Activated naive CD4-positive, alpha-beta T cell treated with anti-CD3 and anti-CD28 coated beads for 36 hours (primary cell): ENCODE measurements at regions of chr20 and their contacts with region 1.

Region 1: DNA sequence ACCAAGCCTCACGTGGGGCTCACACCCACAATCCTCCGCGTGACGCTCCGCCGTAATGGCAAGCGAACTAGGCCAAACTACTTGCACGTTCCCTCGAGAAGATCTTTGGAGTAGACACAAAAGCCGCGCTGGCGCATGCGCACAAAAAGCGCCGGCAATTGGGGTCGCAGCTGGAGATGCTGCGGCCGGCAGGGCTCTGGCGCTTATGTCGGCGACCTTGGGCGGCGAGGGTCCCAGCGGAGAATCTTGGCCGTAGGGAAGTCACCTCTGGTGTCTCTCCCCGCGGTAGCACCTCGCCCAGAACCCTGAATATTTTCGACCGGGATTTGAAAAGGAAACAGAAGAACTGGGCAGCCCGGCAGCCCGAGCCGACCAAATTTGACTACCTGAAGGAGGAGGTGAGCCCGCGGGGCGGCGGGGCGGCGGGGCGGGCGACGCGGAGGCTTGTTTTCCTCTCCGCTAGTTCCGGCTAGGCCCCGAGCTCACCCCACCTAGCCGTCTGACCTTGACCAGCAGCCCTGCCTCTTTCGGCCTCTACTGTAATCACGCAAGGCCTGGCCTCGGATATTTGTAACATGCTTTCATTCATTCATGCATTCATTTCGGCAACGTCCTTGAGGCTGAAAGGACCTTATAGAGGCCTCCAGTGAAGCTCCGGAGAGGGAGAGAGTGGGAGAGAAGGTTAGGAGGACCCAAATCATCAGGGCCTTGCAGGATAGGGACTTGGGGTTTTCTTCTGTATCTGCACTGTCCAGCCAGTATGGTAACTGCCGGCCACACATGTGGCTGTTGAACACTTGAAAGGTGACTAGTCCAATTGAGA is at the starts of genes ESF1 and NDUFAF5:
- DNase-seq: peak; percentile 96
- H3K4me3 Mint-ChIP-seq: peak within 1 kb of the TSS; percentile 99
- H3K27ac Mint-ChIP-seq: peak within 1 kb of the TSS; percentile 95
- H3K4me1 Mint-ChIP-seq: peaks cover 48% of the 10 kb centered on the region
- H3K27me3 Mint-ChIP-seq: no peaks in the 10 kb centered on the region
- total RNA-seq, gene ESF1: 14.5 TPM
- total RNA-seq, gene NDUFAF5: 27.4 to 28.1 TPM

Region 2: GRCh38 chr20:13119583-13119982 is 665.5 kb before region 1 on chr20:
- CTCF ChIA-PET with region 1: no interaction called
- intact Hi-C with region 1: loop called (anchors 5 kb)
- DNase-seq: peak; percentile 43
- H3K4me3 Mint-ChIP-seq: no peak overlapping the region
- H3K27ac Mint-ChIP-seq: no peak overlapping the region
- H3K4me1 Mint-ChIP-seq: no peaks in the 10 kb centered on the region
- H3K27me3 Mint-ChIP-seq: no peaks in the 10 kb centered on the region

Region 3: GRCh38 chr20:13243826-13244376 is 541.2 kb before region 1 on chr20:
- CTCF ChIA-PET with region 1: no interaction called
- intact Hi-C with region 1: loop called (anchors 1 kb)
- DNase-seq: no peak
- H3K4me3 Mint-ChIP-seq: no peak overlapping the region
- H3K27ac Mint-ChIP-seq: no peak overlapping the region
- H3K4me1 Mint-ChIP-seq: peaks cover 38% of the 10 kb centered on the region
- H3K27me3 Mint-ChIP-seq: no peaks in the 10 kb centered on the region

Region 4: DNA sequence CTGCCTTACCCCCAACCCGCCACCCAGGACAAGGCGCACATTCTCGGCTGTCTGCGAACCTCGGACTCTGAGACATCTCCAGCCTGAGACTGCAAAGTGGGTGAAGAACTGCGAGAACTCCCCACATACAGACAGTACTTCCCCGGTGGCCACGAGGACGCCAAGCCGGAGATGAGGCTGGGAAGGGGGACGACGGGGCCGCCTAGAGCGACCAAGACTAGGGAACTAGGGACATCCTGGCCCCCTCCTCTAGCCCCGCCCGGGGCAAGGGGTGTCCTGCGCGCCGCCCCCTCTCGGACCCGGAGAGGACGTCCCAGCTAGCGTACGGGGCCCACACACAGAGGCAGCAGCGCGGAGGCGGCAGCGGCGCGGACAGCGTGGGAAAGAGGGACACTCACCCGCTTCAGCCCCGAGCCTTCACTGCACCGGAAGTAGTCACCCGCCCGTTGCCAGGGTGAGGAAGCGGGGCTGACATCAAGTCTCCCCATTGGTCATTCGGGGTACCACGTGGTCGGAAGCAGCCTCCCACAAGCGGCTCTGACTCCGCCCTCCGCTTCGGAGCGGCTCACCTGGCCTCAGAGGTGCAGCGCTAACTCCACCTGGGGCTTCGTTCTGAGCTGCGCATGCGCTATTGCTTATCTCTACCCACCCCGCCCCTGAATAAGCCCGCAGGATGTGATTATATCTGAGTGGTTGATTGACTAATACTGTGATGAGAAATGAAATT is 146.4 kb before region 1 on chr20 and contains the start of gene TASP1:
- CTCF ChIA-PET with region 1: no interaction called
- intact Hi-C with region 1: loop called (anchors 1 kb)
- DNase-seq: peak; percentile 97
- H3K4me3 Mint-ChIP-seq: peak within 1 kb of the TSS; percentile 91
- H3K27ac Mint-ChIP-seq: peak within 1 kb of the TSS; percentile 76
- H3K4me1 Mint-ChIP-seq: peaks cover 15% of the 10 kb centered on the region
- H3K27me3 Mint-ChIP-seq: peaks cover 1% of the 10 kb centered on the region
- total RNA-seq, gene TASP1: 6.3 to 6.7 TPM

Region 5: GRCh38 chr20:13819885-13820645 is 35.0 kb after region 1 on chr20:
- CTCF ChIA-PET with region 1: interaction called, 6 read pairs
- intact Hi-C with region 1: loop called (anchors 2 kb)
- DNase-seq: peak; percentile 16
- H3K4me3 Mint-ChIP-seq: no peak overlapping the region
- H3K27ac Mint-ChIP-seq: no peak overlapping the region
- H3K4me1 Mint-ChIP-seq: peaks cover 24% of the 10 kb centered on the region
- H3K27me3 Mint-ChIP-seq: no peaks in the 10 kb centered on the region